ENCODE measurements at regions of chr6 and their contacts with region 1.

Region 1: DNA sequence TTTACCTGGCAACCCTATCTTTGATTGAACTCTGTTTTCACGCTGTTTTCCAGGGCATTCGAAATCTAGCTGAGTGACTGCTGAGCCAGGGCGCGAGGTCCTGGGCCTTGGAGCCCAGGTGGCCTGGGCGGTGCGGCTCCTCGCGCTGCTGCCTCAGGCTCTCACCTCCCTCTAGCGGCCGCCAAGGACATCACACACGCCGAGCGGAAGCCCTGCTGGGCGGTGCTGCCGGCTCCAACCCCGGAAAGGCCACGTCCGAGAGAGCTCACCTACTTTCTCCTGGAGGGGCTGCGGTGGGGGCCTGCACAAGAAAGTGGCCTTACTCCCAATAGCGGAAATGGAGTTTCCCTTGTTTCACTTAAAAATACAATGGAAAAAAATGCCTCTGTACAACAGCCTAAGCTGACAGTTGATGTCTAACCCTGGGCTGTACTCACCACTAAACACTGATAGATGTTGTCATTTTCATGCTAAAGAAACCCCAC is 77.7 kb downstream of the ELOVL4 start:
- H3K4me3 Mint-ChIP-seq: peak overlapping the region; percentile 36
- H3K27ac Mint-ChIP-seq: no peak overlapping the region
- H3K4me1 Mint-ChIP-seq: peaks cover 22% of the 10 kb centered on the region
- H3K27me3 Mint-ChIP-seq: peaks cover 4% of the 10 kb centered on the region

Region 2: DNA sequence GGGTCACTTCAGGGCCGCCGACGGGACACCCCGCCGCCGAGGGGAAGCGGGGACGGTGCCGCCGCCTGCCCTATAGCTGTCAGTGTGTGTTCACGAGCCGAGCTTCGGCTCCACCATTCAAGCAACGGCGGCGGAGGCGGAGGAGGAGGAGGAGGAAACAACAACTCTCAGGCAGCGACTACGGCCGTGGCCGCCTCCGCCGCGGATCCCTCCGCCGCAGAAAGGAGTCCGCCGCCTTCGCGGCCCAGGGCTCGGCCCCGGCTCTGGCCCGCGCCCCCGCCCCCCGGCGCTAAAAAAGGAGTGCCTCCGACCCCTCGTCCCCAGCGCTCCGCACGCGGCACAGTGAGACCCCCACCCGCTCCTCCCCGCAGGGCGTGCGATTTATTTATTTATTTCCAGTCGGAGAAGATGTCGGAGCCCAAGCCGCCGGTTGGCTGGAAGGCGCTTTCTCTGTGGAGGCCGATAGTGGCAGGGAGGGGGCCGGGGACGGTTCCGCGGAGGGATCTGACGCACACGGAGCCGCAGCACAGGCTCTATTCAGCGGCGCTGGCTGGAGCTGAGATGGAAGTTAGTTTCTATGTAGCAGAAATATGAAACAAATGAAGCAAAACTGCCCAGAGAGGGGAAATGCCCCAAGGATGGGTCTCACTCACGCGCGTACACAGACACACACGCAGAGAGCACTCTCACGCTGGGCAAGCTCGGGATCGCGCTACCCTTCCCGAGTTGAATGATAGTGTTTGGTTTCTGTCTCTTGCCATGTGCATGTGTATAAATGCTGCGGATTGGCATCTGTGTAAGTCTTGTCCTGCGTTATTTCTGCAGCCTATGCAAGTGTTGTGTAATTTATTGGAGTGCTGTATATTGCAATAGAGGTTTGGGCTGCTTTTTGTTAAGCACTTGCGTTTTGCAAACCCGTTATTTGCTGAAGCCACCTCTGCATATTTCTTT is 791.3 kb before region 1 on chr6 and contains the start of gene PHIP:
- intact Hi-C with region 1: loop called (anchors 10 kb)
- H3K4me3 Mint-ChIP-seq: peak within 1 kb of the TSS; percentile 92
- H3K27ac Mint-ChIP-seq: peak within 1 kb of the TSS; percentile 99
- H3K4me1 Mint-ChIP-seq: peaks cover 35% of the 10 kb centered on the region
- H3K27me3 Mint-ChIP-seq: no peaks in the 10 kb centered on the region

Region 3: GRCh38 chr6:79570129-79571029 is 299.3 kb before region 1 on chr6:
- intact Hi-C with region 1: loop called (anchors 1 kb)
- H3K4me3 Mint-ChIP-seq: peak overlapping the region; percentile 26
- H3K27ac Mint-ChIP-seq: no peak overlapping the region
- H3K4me1 Mint-ChIP-seq: no peaks in the 10 kb centered on the region
- H3K27me3 Mint-ChIP-seq: no peaks in the 10 kb centered on the region

Region 4: GRCh38 chr6:79762370-79762769 is 107.3 kb before region 1 on chr6:
- intact Hi-C with region 1: loop called (anchors 5 kb)
- H3K4me3 Mint-ChIP-seq: no peak overlapping the region
- H3K27ac Mint-ChIP-seq: no peak overlapping the region
- H3K4me1 Mint-ChIP-seq: no peaks in the 10 kb centered on the region
- H3K27me3 Mint-ChIP-seq: peaks cover 8% of the 10 kb centered on the region

Region 5: GRCh38 chr6:79813854-79814709 is 55.6 kb before region 1 on chr6:
- intact Hi-C with region 1: loop called (anchors 1 kb)
- H3K4me3 Mint-ChIP-seq: no peak overlapping the region
- H3K27ac Mint-ChIP-seq: no peak overlapping the region
- H3K4me1 Mint-ChIP-seq: peaks cover 19% of the 10 kb centered on the region
- H3K27me3 Mint-ChIP-seq: peaks cover 19% of the 10 kb centered on the region

Measured in dendritic cell treated with granulocyte-macrophage colony-stimulating factor and Interleukin-4, amounts not matched to agents 40 ng/mL and 50 ng/mL, for 4 days (primary cell).